Activated B cell treated with CpG ODN at 0.5 μM for 24 hours (primary cell): ENCODE measurements at regions of chr3 and their contacts with region 1.

Region 1: DNA sequence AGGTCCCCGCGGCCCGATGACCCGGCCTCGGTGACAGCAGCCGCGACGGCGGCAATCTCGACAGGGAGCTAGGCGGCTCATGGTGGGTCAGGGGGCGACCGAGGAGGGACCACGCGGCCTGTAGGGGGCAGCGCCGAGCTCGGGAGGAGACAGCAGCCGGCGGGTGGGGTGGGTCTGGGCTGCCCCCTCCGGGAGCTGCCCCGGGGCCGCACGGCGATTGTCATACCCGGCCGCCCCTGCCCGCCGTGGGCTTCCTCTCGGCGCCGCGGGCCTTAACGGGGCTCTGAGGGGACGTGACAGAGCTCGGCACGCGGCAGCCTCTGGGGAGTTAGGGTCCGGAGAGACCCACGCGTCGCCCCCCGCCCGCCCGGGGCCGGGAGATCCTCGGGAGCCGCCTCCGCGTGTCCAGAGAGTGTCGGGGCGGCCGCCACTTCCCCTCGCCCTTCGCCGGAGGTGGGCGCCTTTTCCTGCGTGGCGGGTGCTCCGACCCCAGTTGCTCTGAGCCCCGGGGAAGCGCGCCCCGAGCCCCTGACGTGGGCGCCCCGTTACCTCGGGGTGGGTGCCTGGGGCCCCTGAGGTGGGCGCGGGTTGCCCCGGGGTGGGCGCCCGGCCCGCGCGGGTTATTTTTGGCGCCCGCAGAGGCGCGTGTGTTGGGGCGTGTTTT is 539 bp upstream of the PLCL2 start:
- DNase-seq: peak; percentile 76
- ATAC-seq: peak; percentile 62
- H3K4me3 Mint-ChIP-seq: peak overlapping the region; percentile 94
- H3K27ac Mint-ChIP-seq: peak overlapping the region; percentile 96
- H3K4me1 Mint-ChIP-seq: peaks cover 43% of the 10 kb centered on the region
- H3K27me3 Mint-ChIP-seq: no peaks in the 10 kb centered on the region
- CTCF ChIP-seq: no peak

Region 2: GRCh38 chr3:16433701-16434151 is 450.5 kb before region 1 on chr3:
- CTCF ChIA-PET with region 1: no interaction called
- POLR2A ChIA-PET with region 1: no interaction called
- intact Hi-C with region 1: loop called (anchors 5 kb)
- DNase-seq: peak; percentile 58
- ATAC-seq: peak; percentile 63
- H3K4me3 Mint-ChIP-seq: peak overlapping the region; percentile 68
- H3K27ac Mint-ChIP-seq: peak overlapping the region; percentile 74
- H3K4me1 Mint-ChIP-seq: peaks cover 63% of the 10 kb centered on the region
- H3K27me3 Mint-ChIP-seq: no peaks in the 10 kb centered on the region
- CTCF ChIP-seq: no peak

Region 3: DNA sequence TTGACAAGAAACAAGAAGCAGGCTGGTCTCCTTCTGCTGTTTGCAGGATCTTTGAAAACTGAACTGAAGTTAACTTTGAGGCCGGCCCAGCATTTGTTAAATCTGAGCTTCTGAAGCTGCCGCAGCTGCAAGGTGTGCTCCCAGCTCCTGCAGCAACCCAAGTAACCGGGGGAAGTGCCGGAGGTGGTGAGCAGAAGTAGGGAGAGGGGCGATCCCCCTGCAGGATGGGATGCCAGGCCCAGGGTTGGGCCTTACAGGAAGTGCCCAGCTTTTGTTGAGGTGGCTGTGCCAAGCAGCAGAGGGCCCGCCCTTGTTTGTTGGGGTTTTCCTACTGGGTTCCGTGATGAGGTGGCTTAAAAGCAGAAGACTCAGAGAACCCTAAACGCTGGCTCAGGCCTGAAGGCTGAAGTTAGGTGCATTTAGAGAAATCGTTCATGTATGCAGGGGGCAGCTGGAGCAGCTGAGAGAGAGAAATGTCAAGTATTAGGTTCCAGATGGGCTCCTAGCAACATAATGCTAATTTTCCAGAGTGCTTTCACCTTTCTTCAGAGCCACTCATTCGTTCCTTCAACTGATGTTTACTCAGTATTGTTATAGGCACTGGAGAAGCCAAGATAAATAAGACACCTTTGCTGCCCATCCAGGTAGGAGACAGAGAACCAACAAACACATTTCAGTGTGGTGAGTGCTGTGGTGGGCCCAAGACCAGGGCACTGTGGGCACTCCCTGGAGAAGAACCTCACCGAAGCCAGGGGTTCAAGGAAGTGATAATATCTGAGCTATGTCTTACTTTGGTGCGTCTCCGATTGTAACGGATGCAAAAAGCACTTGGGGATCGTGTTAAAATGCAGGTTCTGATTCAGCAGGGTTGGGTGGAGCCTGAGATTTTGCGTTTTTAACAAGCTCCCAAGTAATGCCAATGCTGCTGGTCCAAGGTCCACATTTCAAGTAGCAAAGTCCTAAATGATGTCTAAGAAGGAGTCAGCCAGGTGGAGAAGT is 41.6 kb before region 1 on chr3:
- CTCF ChIA-PET with region 1: interaction called, 14 read pairs
- POLR2A ChIA-PET with region 1: interaction called, 56 read pairs
- intact Hi-C with region 1: loop called (anchors 1 kb)
- DNase-seq: peak; percentile 66
- ATAC-seq: peak; percentile 92
- H3K4me3 Mint-ChIP-seq: peak overlapping the region; percentile 75
- H3K27ac Mint-ChIP-seq: peak overlapping the region; percentile 98
- H3K4me1 Mint-ChIP-seq: peaks cover 67% of the 10 kb centered on the region
- H3K27me3 Mint-ChIP-seq: no peaks in the 10 kb centered on the region
- CTCF ChIP-seq: no peak

Region 4: DNA sequence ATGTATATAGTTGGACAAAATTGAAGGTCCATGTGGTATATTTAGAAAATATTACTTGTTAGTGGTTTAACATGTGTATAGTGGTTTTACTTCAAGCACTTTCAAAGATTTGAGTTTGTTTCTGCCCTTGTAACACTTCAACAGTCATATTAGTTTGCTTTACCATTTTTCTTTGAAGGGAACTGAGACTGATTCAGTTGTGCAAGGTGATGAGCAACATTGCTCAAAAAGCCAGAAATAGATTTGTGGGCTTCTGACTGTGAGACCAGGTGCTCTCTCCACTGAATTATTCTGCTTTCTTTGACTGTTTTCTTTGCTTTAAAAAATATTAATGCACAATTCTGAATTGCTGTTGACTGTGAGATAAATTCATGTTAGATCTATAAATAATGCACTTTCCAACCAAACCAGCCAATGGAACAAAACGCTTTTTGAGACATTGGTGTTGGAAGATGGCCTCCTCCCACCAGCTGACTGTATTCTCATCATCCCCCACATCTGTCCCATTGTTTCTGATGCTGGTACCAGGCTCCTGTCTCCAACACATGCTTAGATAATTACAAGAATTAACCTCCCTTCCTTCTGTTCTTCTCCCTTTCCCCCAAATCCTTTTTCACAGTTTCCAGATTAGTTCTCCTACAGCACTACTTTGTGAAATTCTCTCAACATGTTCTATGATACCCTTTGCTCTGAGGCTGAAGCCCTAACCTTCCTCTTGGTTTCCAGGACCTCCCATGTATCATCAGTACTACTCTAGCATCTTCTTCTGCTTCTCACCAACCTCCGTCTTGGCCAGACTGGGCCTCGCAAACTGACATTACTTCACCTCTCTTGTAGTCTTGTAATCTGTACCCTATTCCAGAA is 28.4 kb after region 1 on chr3:
- CTCF ChIA-PET with region 1: no interaction called
- POLR2A ChIA-PET with region 1: interaction called, 10 read pairs
- intact Hi-C with region 1: loop called (anchors 1 kb)
- DNase-seq: no peak
- ATAC-seq: peak; percentile 85
- H3K4me3 Mint-ChIP-seq: peak overlapping the region; percentile 47
- H3K27ac Mint-ChIP-seq: peak overlapping the region; percentile 92
- H3K4me1 Mint-ChIP-seq: peaks cover 84% of the 10 kb centered on the region
- H3K27me3 Mint-ChIP-seq: no peaks in the 10 kb centered on the region
- CTCF ChIP-seq: no peak

Region 5: DNA sequence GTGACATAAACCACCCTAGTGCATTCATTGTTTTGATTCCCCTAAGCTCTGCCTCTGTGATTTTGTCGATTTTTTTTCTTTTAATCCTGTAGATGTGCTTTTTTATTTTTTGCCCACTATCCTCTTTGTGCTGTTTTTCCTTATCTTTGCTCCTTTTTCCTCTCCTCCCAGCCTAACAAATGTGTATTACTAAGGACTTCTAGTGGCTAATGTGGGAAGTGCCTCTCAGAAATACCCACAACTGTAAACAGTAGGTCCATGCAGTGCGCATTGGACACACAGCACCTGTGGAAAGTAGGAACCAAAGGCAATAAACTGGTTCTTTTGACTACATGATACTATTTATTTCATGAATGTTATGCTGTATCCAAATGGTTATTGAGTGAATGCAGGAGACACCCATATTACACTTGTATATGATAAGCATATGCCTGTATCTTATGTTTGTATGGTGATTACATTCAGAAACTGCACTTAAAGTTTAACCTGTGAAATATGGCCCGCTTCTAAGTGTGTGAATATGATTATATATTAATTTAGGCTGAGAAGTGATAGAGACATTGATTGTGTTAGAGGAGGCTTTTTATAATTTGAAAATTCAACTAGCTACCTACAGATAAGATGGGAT is 148.3 kb after region 1 on chr3:
- CTCF ChIA-PET with region 1: interaction called, 17 read pairs
- POLR2A ChIA-PET with region 1: interaction called, 9 read pairs
- intact Hi-C with region 1: no loop called
- DNase-seq: no peak
- ATAC-seq: peak; percentile 31
- H3K4me3 Mint-ChIP-seq: no peak overlapping the region
- H3K27ac Mint-ChIP-seq: no peak overlapping the region
- H3K4me1 Mint-ChIP-seq: peaks cover 40% of the 10 kb centered on the region
- H3K27me3 Mint-ChIP-seq: no peaks in the 10 kb centered on the region
- CTCF ChIP-seq: no peak

Region 6: DNA sequence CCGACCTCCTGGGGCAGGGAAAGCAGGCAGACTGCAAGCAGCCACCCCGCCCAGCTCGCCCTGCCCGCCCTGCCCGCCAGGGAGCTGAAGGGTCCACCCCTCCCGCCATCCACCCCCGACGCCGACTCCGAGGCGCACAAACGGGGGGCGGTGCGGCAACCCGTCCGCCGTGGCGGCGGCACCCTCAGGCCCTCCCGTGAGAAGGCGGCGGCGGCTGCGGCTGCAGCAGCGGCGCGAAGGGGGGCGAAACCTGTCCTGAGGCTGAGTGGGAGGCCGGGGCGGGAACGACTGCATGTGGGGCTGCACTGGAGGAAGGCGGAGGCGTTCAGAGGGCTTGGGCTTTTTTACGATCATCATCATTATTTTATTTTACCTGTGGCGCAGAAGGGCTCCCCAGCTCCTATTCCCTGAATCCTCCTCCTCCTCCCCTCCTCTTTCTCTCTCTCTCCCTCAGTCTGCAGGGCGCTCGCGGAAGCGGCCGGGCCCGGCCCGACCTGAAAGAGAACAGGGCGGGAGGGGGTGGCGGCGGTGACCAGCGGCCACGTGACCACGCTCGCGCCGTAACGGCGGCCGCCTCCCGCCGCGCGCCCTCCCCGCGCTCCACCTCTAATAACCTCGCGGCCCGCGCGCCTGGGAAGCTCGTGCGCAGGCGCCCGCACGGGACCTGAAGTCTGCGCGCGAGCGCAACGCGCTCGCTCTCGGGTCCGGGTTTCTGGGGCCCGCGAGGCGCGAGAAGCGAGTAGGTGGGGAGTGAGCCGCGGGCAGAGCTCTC is 858.1 kb after region 1 on chr3 and contains the start of gene TBC1D5:
- CTCF ChIA-PET with region 1: no interaction called
- POLR2A ChIA-PET with region 1: no interaction called
- intact Hi-C with region 1: loop called (anchors 10 kb)
- DNase-seq: peak; percentile 91
- ATAC-seq: peak; percentile 83
- H3K4me3 Mint-ChIP-seq: peak within 1 kb of the TSS; percentile 96
- H3K27ac Mint-ChIP-seq: peak within 1 kb of the TSS; percentile 97
- H3K4me1 Mint-ChIP-seq: peaks cover 57% of the 10 kb centered on the region
- H3K27me3 Mint-ChIP-seq: no peaks in the 10 kb centered on the region
- CTCF ChIP-seq: no peak
- total RNA-seq, gene TBC1D5: 102 and 106 TPM in 2 replicates